ENCODE measurements at regions of chr21 and their contacts with region 1.

Region 1: DNA sequence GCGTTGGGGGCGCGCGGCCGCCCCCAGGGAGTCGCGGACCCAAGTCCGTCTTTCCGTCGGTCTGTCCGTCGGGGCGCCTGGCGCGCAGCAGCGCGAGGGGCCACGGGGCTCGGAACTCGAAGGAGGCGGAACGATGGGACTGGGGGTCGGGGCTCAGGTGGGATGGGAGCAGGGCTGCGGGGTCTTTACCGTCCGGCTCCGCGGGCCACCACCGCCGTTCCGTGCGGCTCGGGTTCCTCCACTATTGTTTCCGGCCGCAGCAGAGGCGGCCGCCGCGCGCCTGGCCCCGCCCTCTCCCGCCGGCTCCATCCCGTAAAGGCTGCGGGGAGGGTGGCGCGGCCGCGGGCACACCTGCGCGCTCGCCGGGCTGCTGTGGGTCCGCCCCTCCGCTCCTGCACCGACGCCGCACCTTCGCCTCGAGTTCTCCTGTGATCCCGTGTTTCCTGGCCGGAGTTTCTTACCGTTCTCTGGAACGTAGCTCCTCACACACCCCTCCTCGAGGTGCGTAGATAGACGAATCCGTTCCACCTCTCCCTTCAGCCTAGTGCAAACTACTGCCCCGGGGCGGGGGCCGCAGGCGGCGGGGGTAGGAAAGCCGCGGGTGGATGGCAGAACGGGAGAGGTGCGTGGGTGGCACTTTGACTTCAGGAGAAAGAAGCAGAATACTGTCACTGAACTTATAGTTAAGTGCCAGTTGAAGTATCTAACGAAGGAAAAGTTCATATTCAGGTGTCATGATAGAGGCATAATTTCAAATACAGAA is at the start of gene C21orf91:
- DNase-seq: peak; percentile 72 to 94 (median 89)
- ATAC-seq: peak; percentile 85
- H3K4me3 ChIP-seq: peak within 1 kb of the TSS; percentile 76 to 95
- H3K4me3 Mint-ChIP-seq: peak within 1 kb of the TSS; percentile 98
- H3K27ac ChIP-seq: peak within 1 kb of the TSS; percentile 91 to 92
- H3K27ac Mint-ChIP-seq: peak within 1 kb of the TSS; percentile 100
- H3K4me1 ChIP-seq: peaks cover 27% of the 10 kb centered on the region
- H3K4me1 Mint-ChIP-seq: peaks cover 53% of the 10 kb centered on the region
- H3K27me3 ChIP-seq: no peaks in the 10 kb centered on the region
- H3K27me3 Mint-ChIP-seq: no peaks in the 10 kb centered on the region
- CTCF ChIP-seq: no peak
- total RNA-seq, gene C21orf91: 37.0 to 43.6 TPM

Region 2: DNA sequence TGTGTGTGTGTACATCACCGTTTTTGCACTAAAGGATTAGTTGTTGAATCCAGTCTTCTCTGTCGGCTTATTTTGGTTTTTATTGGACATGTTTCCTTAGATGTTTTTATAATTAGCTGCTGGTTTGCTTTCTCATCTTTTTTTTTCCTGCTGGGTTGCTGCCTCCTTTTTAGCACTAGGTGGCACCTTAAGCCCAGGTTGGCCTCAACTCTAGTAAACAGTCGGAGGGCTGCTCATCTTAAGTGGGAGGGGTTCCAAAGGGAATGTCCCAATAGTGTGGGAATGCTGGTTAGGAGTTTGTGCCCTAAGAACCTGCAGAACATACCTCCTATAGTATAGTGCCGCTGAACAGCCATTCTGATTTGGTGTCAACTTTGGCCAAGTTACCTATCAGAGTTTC is 876.6 kb before region 1 on chr21:
- CTCF ChIA-PET with region 1: no interaction called
- POLR2A ChIA-PET with region 1: no interaction called
- intact Hi-C with region 1: no loop called
- DNase-seq: no peak
- ATAC-seq: no peak
- H3K4me3 ChIP-seq: no peak overlapping the region
- H3K4me3 Mint-ChIP-seq: no peak overlapping the region
- H3K27ac ChIP-seq: no peak overlapping the region
- H3K27ac Mint-ChIP-seq: no peak overlapping the region
- H3K4me1 ChIP-seq: no peaks in the 10 kb centered on the region
- H3K4me1 Mint-ChIP-seq: no peaks in the 10 kb centered on the region
- H3K27me3 ChIP-seq: no peaks in the 10 kb centered on the region
- H3K27me3 Mint-ChIP-seq: no peaks in the 10 kb centered on the region
- CTCF ChIP-seq: no peak

Region 3: GRCh38 chr21:17512253-17513213 is 306.8 kb before region 1 on chr21 and contains the start of gene CXADR:
- CTCF ChIA-PET with region 1: no interaction called
- POLR2A ChIA-PET with region 1: no interaction called
- intact Hi-C with region 1: loop called (anchors 10 kb)
- DNase-seq: peak; percentile 50 to 88 (median 76)
- ATAC-seq: peak; percentile 79
- H3K4me3 ChIP-seq: peak within 1 kb of the TSS; percentile 56 to 58
- H3K4me3 Mint-ChIP-seq: peak within 1 kb of the TSS; percentile 90
- H3K27ac ChIP-seq: no peak within 1 kb of the TSS
- H3K27ac Mint-ChIP-seq: peak within 1 kb of the TSS; percentile 15
- H3K4me1 ChIP-seq: peaks cover 14% of the 10 kb centered on the region
- H3K4me1 Mint-ChIP-seq: peaks cover 17% of the 10 kb centered on the region
- H3K27me3 ChIP-seq: peaks cover 0 to 7% of the 10 kb centered on the region in 2 experiments
- H3K27me3 Mint-ChIP-seq: peaks cover 16% of the 10 kb centered on the region
- CTCF ChIP-seq: peak; percentile 47
- total RNA-seq, gene CXADR: 0.69 to 1.0 TPM

Region 4: DNA sequence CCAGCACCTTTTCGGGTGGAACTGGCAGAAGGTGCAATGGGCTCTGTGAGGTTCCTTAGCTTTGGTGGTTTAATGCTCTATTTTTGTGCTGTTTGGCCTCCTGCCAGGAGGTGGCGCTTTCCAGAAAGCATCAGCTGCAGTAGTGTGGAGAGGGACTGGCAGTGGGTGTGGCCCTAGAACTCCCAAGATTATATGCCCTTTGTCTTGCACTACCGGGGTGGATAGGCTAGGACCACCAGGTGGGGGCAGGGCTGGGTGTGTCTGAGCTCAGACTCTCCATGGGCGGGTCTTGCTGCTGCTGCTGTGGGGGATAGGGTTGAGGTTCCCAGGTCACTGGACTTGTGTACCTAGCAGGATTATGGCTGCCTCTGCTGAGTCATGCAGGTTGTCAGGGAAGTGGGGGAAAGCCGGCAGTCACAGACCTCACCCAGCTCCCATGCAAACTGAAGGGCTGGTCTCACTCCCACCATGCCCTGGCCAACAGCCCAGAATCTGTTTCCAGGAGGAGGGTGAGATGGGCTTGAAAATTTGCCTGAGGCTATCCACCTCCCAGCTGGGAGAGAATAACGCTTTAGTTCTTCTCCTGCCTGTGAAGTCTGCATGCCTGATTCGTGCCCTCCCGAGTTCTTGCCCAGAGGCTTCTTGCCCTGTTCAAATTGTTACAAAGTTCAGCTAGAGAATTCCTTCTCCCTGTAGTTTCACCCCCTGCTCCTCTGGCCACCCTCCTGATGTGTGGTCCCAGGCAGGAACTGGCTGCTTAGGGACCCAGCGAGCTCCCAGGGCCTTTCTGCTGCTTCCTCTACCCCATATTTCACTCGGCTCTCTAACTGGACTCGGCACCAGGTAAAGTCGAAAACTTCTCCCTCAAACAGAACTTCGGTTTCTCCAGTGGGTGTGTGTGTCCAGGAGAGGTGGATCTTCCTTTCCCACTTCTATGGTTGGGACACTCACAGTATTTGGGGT is 130.1 kb before region 1 on chr21:
- CTCF ChIA-PET with region 1: interaction called, 3 read pairs
- POLR2A ChIA-PET with region 1: interaction called, 5 read pairs
- intact Hi-C with region 1: loop called (anchors 2 kb)
- DNase-seq: peak; percentile 3 to 73 (median 42)
- ATAC-seq: no peak
- H3K4me3 ChIP-seq: no peak overlapping the region
- H3K4me3 Mint-ChIP-seq: no peak overlapping the region
- H3K27ac ChIP-seq: no peak overlapping the region
- H3K27ac Mint-ChIP-seq: no peak overlapping the region
- H3K4me1 ChIP-seq: peaks cover 10% of the 10 kb centered on the region
- H3K4me1 Mint-ChIP-seq: peaks cover 37% of the 10 kb centered on the region
- H3K27me3 ChIP-seq: no peaks in the 10 kb centered on the region
- H3K27me3 Mint-ChIP-seq: no peaks in the 10 kb centered on the region
- CTCF ChIP-seq: peak; percentile 32

Region 5: DNA sequence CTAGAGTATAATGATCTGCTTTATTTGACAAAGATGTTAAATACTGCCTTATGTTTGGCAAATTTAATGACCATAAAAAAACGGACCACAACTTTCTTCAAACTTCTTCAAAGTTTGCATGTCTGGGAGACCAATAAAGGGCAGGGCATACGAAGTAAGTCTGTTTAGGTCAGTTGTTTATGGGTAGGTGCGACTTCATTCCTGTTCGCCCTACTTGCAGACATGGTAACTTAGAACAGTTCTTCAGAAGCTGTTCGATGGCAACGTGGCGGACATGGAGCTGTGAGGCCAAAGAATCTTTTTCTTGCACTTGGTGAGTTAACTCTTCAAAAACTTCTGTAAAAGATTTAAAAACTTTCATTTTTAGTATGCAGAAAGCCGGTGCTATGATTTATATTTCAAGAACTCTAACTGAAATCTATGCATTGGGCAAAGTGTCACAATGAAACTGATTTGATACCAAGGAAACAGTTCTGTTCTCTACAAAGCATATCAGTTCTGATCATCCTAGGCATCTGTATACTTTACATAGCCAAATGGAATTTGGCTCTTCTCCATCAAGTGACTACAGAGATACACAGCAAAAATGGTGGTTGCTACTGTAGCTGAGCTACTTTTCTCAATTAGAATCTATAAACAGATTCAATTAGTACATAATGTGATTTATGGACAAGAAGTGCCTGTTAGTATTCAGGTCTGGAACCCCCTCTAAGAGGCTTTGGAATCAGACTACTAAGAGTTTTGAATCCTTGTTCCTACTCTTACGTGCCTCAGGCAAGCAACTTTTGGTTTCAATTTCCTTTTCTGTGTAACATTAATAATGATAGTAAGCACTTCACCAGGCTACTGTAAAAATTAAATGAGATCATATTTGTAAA is 25.8 kb before region 1 on chr21:
- CTCF ChIA-PET with region 1: interaction called, 5 read pairs
- POLR2A ChIA-PET with region 1: interaction called, 16 read pairs
- intact Hi-C with region 1: loop called (anchors 2 kb)
- DNase-seq: peak in 2 of 9 experiments; percentile 52 to 71
- ATAC-seq: peak; percentile 52
- H3K4me3 ChIP-seq: peak overlapping the region; percentile 31 to 45
- H3K4me3 Mint-ChIP-seq: peak overlapping the region; percentile 76
- H3K27ac ChIP-seq: peak overlapping the region; percentile 61 to 90
- H3K27ac Mint-ChIP-seq: peak overlapping the region; percentile 92
- H3K4me1 ChIP-seq: peaks cover 55% of the 10 kb centered on the region
- H3K4me1 Mint-ChIP-seq: peaks cover 75% of the 10 kb centered on the region
- H3K27me3 ChIP-seq: no peaks in the 10 kb centered on the region
- H3K27me3 Mint-ChIP-seq: no peaks in the 10 kb centered on the region
- CTCF ChIP-seq: no peak

Region 6: DNA sequence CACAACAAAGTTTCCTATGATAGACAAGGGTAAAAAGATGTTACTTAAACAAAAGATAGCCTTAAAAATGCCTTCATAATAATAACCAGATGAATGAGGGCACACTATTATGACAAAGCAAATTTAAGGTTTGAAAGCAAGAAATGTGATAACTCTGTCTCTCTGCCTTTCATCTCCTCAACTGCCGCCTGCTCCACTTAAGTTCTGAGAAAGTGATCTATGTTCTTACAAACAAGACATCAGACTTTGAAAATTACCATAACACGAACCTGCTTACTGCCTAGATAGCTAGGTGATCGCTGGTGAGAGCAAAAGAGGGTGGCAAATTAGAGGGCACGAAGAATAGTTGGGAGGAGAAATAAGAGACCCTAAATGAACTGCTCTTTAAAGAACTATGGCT is 13.3 kb before region 1 on chr21:
- CTCF ChIA-PET with region 1: interaction called, 5 read pairs
- POLR2A ChIA-PET with region 1: interaction called, 8 read pairs
- intact Hi-C with region 1: loop called in 1 of 2 experiments (anchors 2 kb)
- DNase-seq: no peak
- ATAC-seq: peak; percentile 32
- H3K4me3 ChIP-seq: no peak overlapping the region
- H3K4me3 Mint-ChIP-seq: no peak overlapping the region
- H3K27ac ChIP-seq: no peak overlapping the region
- H3K27ac Mint-ChIP-seq: peak overlapping the region; percentile 55
- H3K4me1 ChIP-seq: peaks cover 19% of the 10 kb centered on the region
- H3K4me1 Mint-ChIP-seq: peaks cover 62% of the 10 kb centered on the region
- H3K27me3 ChIP-seq: no peaks in the 10 kb centered on the region
- H3K27me3 Mint-ChIP-seq: no peaks in the 10 kb centered on the region
- CTCF ChIP-seq: no peak

Measured in CD8-positive, alpha-beta T cell (primary cell).